Stomach (tissue), 19 donors: ENCODE measurements at regions of chr12 and their contacts with region 1.

Region 1: GRCh38 chr12:77049767-77050353 is 15.5 kb downstream of the E2F7 start:
- DNase-seq: peak in 1 of 2 donors; percentile 86
- H3K4me3 ChIP-seq: no peak overlapping the region
- H3K27ac ChIP-seq: no peak overlapping the region
- H3K4me1 ChIP-seq: peaks cover 0 to 5% (median 0%) of the 10 kb centered on the region in 4 donors
- H3K27me3 ChIP-seq: no peaks in the 10 kb centered on the region
- CTCF ChIP-seq: peak in 5 of 7 experiments; percentile 55 to 69 (median 65)
- EP300 ChIP-seq: no peak
- POLR2A ChIP-seq: no peak

Region 2: GRCh38 chr12:76927170-76927784 is 122.6 kb before region 1 on chr12:
- intact Hi-C with region 1: no loop called
- DNase-seq: peak; percentile 28 to 29
- H3K4me3 ChIP-seq: no peak overlapping the region
- H3K27ac ChIP-seq: no peak overlapping the region
- H3K4me1 ChIP-seq: no peaks in the 10 kb centered on the region
- H3K27me3 ChIP-seq: no peaks in the 10 kb centered on the region
- CTCF ChIP-seq: peak in 1 of 7 experiments; percentile 13
- EP300 ChIP-seq: no peak
- POLR2A ChIP-seq: no peak

Region 3: DNA sequence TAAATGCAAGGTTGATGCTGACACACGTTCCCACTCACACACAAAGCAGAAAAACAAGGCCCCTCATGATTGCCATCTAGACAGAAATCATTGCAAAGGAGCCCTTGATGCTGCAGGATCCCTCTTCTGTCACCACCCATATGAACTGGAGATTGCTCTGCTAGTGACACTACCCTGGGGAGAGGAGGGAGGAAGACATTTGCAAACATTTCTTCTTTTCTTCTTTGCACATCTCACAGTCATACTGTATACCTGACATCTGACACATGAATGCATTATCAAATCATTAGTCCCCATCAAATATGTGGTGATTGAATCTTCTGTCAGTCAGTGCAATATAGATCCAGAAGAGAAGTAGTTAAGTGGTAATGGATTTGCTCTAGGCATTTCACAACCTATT is 224.0 kb after region 1 on chr12:
- intact Hi-C with region 1: no loop called
- DNase-seq: no peak
- H3K4me3 ChIP-seq: no peak overlapping the region
- H3K27ac ChIP-seq: no peak overlapping the region
- H3K4me1 ChIP-seq: no peaks in the 10 kb centered on the region
- H3K27me3 ChIP-seq: no peaks in the 10 kb centered on the region
- CTCF ChIP-seq: no peak
- EP300 ChIP-seq: no peak
- POLR2A ChIP-seq: no peak

Region 4: DNA sequence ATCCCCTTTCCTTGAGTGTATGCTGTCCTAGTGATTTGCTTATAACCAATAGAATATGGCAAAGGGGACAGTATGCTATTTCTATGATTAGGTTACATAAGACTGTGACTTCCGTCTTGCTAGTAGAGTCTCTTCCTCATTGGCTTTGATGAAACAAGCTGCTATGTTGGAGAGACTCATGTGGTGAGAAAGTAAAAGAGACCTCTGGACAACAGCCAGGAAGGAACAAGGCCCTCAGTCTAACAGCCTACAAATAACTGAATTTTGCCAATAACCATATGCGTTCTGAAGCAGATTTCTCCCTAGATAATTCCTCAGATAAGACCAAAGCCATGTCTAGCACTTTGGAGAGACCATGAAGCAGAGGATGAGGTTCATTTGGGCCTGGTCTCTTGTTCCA is 646.3 kb after region 1 on chr12:
- intact Hi-C with region 1: loop called (anchors 10 kb)
- DNase-seq: no peak
- H3K4me3 ChIP-seq: no peak overlapping the region
- H3K27ac ChIP-seq: no peak overlapping the region
- H3K4me1 ChIP-seq: no peaks in the 10 kb centered on the region
- H3K27me3 ChIP-seq: no peaks in the 10 kb centered on the region
- CTCF ChIP-seq: no peak
- EP300 ChIP-seq: no peak
- POLR2A ChIP-seq: no peak